Keratinocyte (primary cell): ENCODE measurements at regions of chr20 and their contacts with region 1.

Region 1: DNA sequence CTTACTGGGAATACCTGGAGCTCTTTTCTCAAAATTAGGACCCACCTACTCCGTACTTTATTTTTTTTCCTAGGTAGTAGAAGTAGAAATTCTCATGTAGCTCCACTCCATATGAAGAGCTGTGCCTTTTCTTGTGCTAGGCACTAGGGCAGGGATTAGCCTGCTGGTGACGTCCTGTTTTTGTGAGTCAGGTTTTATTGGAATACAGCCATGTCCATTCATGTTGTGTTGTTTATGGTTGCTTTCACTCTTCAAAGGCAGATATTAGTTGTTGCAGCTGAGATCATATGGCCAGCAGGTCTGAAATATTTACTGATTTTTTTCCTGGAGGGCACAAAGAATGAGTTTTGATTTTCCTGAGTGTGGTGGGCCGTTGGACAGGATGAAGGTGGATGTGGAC is 20.5 kb downstream of the XRN2 start:
- DNase-seq: peak; percentile 50
- H3K4me3 ChIP-seq: no peak overlapping the region
- H3K27ac ChIP-seq: peak overlapping the region; percentile 37
- H3K4me1 ChIP-seq: peaks cover 20% of the 10 kb centered on the region
- H3K27me3 ChIP-seq: no peaks in the 10 kb centered on the region
- CTCF ChIP-seq: no peak

Region 2: GRCh38 chr20:21387528-21387927 is 63.9 kb after region 1 on chr20:
- dilution Hi-C with region 1: loop called (anchors 10 kb)
- DNase-seq: no peak
- H3K4me3 ChIP-seq: no peak overlapping the region
- H3K27ac ChIP-seq: no peak overlapping the region
- H3K4me1 ChIP-seq: no peaks in the 10 kb centered on the region
- H3K27me3 ChIP-seq: peaks cover 12% of the 10 kb centered on the region
- CTCF ChIP-seq: no peak